Transverse colon (tissue), 4 donors: ENCODE measurements at regions of chr3 and their contacts with region 1.

Region 1: DNA sequence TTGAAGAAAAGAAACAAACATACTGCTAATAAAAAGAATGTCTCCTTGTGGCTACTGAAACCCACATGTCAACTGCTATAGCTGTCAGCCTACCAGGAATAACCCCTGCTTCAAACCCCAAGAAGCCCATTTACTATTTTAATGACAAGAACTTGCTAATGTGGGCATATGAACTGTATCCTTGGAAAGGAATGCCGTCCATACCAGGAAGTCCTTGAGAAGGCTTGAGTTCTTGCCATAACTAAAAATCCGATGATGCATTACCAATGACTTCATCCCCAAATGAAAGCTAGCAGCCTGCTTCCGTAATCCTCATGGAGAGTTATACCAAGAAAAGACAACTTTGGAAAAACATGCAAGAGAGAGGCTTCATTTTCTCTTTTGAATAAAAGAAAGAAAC is 34.8 kb downstream of the MINDY4B start:
- DNase-seq: no peak
- H3K4me3 ChIP-seq: no peak overlapping the region
- H3K27ac ChIP-seq: no peak overlapping the region
- H3K4me1 ChIP-seq: no peaks in the 10 kb centered on the region
- H3K27me3 ChIP-seq: no peaks in the 10 kb centered on the region
- CTCF ChIP-seq: no peak
- EP300 ChIP-seq: no peak
- POLR2A ChIP-seq: no peak

Region 2: GRCh38 chr3:150546226-150547044 is 324.0 kb before region 1 on chr3 and contains the starts of genes EIF2A and SERP1:
- in situ Hi-C with region 1: loop called in 2 of 4 experiments (anchors 25 kb)
- intact Hi-C with region 1: no loop called
- DNase-seq: peak; percentile 99
- H3K4me3 ChIP-seq: peak within 1 kb of the TSS; percentile 67 to 94 (median 82)
- H3K27ac ChIP-seq: peak within 1 kb of the TSS; percentile 96 to 100 (median 98)
- H3K4me1 ChIP-seq: peaks cover 20 to 38% (median 27%) of the 10 kb centered on the region in 4 donors
- H3K27me3 ChIP-seq: no peaks in the 10 kb centered on the region
- CTCF ChIP-seq: no peak
- EP300 ChIP-seq: no peak
- POLR2A ChIP-seq: peak; percentile 99
- total RNA-seq, gene EIF2A: 20.9 to 132 (median 72.2) TPM
- total RNA-seq, gene SERP1: 96.9 to 341 (median 275) TPM

Region 3: DNA sequence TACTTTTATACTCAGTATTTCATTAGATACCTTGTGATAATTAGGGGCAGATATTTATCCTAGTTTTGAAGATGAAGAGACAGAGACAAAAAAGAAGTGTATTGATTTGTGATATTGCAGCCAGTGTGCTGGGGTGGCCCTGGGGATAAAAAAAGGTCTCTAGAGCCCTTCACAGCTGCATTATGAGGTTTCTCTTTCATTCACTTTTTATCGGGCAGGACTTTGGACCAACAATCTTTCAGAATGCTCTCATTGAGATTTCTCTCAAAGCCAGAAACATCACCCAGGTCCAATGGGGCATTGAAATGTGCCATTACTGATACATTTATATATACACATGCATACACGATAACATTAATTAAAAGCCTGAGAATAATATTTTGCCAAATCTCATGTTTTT is 287.8 kb before region 1 on chr3:
- in situ Hi-C with region 1: no loop called
- intact Hi-C with region 1: no loop called
- DNase-seq: no peak
- H3K4me3 ChIP-seq: no peak overlapping the region
- H3K27ac ChIP-seq: no peak overlapping the region
- H3K4me1 ChIP-seq: no peaks in the 10 kb centered on the region
- H3K27me3 ChIP-seq: no peaks in the 10 kb centered on the region
- CTCF ChIP-seq: no peak
- EP300 ChIP-seq: no peak
- POLR2A ChIP-seq: no peak

Region 4: GRCh38 chr3:150703299-150704134 is 166.9 kb before region 1 on chr3 and contains the start of gene ERICH6:
- in situ Hi-C with region 1: loop called in 1 of 4 experiments (anchors 25 kb)
- intact Hi-C with region 1: no loop called
- DNase-seq: peak; percentile 93
- H3K4me3 ChIP-seq: peak within 1 kb of the TSS; percentile 33 to 87 (median 64)
- H3K27ac ChIP-seq: peak within 1 kb of the TSS; percentile 82 to 91 (median 86)
- H3K4me1 ChIP-seq: peaks cover 0 to 12% (median 7%) of the 10 kb centered on the region in 4 donors
- H3K27me3 ChIP-seq: no peaks in the 10 kb centered on the region
- CTCF ChIP-seq: peak in 2 of 5 experiments; percentile 8 to 60
- EP300 ChIP-seq: no peak
- POLR2A ChIP-seq: peak; percentile 58
- total RNA-seq, gene ERICH6: not detected

Region 5: GRCh38 chr3:150721285-150722130 is 148.9 kb before region 1 on chr3:
- in situ Hi-C with region 1: loop called (anchors 5 to 25 kb)
- intact Hi-C with region 1: loop called (anchors 1 kb)
- DNase-seq: no peak
- H3K4me3 ChIP-seq: no peak overlapping the region
- H3K27ac ChIP-seq: no peak overlapping the region
- H3K4me1 ChIP-seq: peaks cover 0 to 16% (median 7%) of the 10 kb centered on the region in 4 donors
- H3K27me3 ChIP-seq: no peaks in the 10 kb centered on the region
- CTCF ChIP-seq: peak; percentile 82 to 93 (median 87)
- EP300 ChIP-seq: no peak
- POLR2A ChIP-seq: no peak

Region 6: DNA sequence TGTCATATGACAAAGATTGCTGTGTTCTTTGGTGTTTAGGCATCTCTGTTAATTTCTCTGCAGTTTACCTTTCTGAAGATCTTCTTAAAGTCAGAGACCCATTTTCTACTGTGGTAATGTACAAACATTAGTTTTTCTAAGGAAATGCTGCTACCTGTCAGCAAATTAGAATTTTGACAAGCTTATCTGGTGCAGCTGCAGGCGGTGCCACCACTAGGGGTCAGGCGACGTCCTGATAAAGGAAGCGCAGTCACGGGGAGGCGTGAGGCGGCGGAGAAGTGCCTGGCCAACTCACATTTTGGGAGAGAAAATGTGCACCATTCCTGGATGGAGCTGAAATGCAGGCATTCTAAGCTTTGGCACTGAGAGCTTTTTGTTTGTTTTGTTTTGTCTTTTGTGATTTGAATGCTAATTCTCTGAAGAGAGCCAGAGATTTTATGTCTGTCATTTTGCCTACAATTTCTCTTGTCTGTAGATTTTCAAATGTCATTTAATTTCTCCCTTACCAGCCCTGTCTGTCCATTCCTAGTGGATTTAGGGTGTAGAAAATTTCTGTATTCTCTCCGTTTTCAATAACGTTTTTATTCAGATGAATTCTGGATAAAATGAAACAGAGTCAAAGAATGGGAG is 82.5 kb before region 1 on chr3:
- in situ Hi-C with region 1: loop called in 1 of 4 experiments (anchors 10 kb)
- intact Hi-C with region 1: no loop called
- DNase-seq: peak; percentile 87
- H3K4me3 ChIP-seq: no peak overlapping the region
- H3K27ac ChIP-seq: no peak overlapping the region
- H3K4me1 ChIP-seq: no peaks in the 10 kb centered on the region
- H3K27me3 ChIP-seq: peaks cover 7% of the 10 kb centered on the region
- CTCF ChIP-seq: peak; percentile 83 to 93 (median 90)
- EP300 ChIP-seq: no peak
- POLR2A ChIP-seq: no peak

Region 7: GRCh38 chr3:151290673-151291072 is 420.3 kb after region 1 on chr3:
- in situ Hi-C with region 1: no loop called
- intact Hi-C with region 1: no loop called
- DNase-seq: no peak
- H3K4me3 ChIP-seq: no peak overlapping the region
- H3K27ac ChIP-seq: no peak overlapping the region
- H3K4me1 ChIP-seq: no peaks in the 10 kb centered on the region
- H3K27me3 ChIP-seq: no peaks in the 10 kb centered on the region
- CTCF ChIP-seq: peak in 2 of 5 experiments; percentile 9 to 16
- EP300 ChIP-seq: no peak
- POLR2A ChIP-seq: no peak